ENCODE measurements at regions of chr9 and their contacts with region 1.

Region 1: GRCh38 chr9:124839612-124840299 is 13.5 kb upstream of the WDR38 start:
- H3K4me3 ChIP-seq: no peak overlapping the region
- H3K27ac ChIP-seq: no peak overlapping the region
- H3K4me1 ChIP-seq: peaks cover 3% of the 10 kb centered on the region; the same call in 1 of the 2 replicates
- CTCF ChIP-seq: no peak

Region 2: GRCh38 chr9:124708633-124709291 is 131.0 kb before region 1 on chr9:
- CTCF ChIA-PET with region 1: no interaction called
- POLR2A ChIA-PET with region 1: no interaction called
- H3K4me3 ChIP-seq: no peak overlapping the region
- H3K27ac ChIP-seq: no peak overlapping the region
- H3K4me1 ChIP-seq: no peaks in the 10 kb centered on the region
- CTCF ChIP-seq: no peak

Region 3: DNA sequence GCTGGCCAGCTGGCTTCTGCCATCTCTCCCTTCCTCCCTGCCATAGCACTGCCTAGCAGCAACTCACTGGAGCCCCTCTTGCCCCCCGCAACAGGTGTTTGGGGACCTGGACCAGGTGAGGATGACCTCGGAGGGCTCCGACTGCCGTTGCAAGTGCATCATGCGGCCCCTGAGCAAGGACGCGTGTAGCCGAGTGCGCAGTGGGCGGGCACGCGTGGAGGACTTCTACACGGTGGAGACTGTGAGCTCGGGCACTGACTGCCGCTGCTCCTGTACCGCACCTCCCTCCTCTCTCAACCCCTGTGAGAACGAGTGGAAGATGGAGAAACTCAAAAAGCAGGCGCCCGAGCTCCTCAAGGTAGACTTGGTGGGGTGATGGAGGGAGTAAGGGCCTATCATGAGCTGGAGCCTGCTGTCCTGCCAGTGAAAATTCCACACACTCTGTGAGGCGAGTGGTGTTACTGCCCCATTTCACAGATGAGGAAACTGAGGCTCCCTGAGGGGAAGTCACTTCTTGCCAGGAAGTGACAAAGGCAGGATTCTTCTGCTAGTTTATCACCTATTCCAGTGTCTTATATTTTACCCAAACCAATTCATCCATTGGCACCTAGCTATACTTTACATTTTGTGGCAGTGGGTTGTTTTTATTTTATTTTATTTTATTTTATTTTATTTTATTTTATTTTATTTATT is 52.7 kb before region 1 on chr9:
- CTCF ChIA-PET with region 1: interaction called, 1,257 read pairs
- POLR2A ChIA-PET with region 1: no interaction called
- H3K4me3 ChIP-seq: no peak overlapping the region
- H3K27ac ChIP-seq: no peak overlapping the region
- H3K4me1 ChIP-seq: no peaks in the 10 kb centered on the region
- CTCF ChIP-seq: no peak

Region 4: GRCh38 chr9:124794902-124795491 is 44.8 kb before region 1 on chr9:
- CTCF ChIA-PET with region 1: interaction called, 15 read pairs
- POLR2A ChIA-PET with region 1: no interaction called
- H3K4me3 ChIP-seq: no peak overlapping the region
- H3K27ac ChIP-seq: no peak overlapping the region
- H3K4me1 ChIP-seq: no peaks in the 10 kb centered on the region
- CTCF ChIP-seq: peak; percentile 44; the same call in 1 of the 2 replicates

Region 5: DNA sequence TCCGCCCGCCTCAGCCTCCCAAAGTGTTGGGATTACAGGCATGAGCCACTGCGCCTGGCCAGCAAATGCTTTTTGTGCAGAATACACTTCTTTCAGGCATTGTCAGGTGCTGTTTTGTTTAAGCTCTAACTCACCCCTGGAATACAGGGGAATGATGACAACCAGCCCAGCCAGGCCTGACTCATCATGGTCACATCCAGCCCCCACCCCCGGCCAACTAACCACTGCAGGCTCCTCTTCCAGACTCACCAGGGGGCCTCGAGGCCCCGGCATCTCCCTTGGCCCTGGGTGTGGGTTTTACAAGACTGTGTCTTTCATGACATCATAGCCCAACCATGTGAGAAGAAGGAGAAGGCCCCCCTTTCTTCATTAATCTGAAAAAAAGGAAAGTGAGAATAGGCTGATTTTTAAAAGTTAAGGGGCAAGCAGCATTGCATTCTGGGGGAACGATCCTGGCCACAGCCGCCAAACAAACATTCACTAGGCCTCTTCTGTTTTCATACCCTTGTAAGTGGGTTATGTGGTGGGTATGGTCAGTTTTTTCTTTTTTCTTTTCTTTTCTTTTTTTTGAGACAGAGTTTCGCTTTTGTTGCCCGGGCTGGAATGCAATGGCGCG is 27.2 kb before region 1 on chr9:
- CTCF ChIA-PET with region 1: interaction called, 15 read pairs
- POLR2A ChIA-PET with region 1: interaction called, 13 read pairs
- H3K4me3 ChIP-seq: no peak overlapping the region
- H3K27ac ChIP-seq: no peak overlapping the region; the same call in none of the 2 replicates
- H3K4me1 ChIP-seq: 0 out of 2 replicates have a peak, but pooled peaks cover 3% of the 10 kb centered on the region
- CTCF ChIP-seq: no peak

Region 6: DNA sequence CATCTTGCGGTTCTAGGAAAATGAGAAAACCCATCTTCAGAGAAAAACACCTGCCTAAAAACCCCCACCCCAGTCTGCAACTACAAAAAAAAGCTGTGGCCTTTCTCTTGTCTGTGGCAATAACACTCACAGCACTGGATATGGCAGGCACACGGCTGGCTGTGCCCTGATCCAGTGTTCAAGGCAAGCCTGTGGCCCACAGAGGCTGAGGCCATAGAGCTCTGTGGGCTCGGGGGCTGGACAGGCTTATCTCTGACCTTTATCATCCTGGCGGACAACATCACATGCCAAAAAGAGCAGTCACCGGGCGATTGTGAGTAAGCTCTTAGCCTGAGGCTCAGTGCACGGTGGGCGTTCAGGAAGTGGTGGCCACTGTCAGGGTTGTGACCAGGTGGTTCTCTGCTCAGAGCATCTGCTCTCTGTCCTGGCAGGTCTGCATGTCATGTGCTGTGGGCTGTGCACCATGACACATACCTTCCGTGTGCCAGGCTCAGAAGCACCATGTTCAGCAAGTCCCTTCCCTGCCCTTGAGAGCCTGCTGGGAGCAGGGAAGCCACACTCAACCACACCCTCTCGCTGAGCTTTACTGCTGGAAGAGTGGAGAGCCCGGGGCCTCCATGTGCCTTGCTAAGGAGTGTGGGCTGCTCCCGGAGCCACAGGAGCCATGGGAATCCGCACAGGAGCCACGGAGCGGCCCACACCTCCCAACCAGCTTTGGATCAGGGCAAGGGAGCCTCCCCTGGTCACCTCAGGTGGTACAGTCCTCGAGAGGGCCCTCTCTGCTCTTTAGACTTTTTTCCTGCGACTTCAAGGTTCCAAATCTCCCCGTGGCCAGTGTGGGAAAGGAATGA is 21.1 kb before region 1 on chr9:
- CTCF ChIA-PET with region 1: interaction called, 15 read pairs
- POLR2A ChIA-PET with region 1: interaction called, 13 read pairs
- H3K4me3 ChIP-seq: no peak overlapping the region
- H3K27ac ChIP-seq: no peak overlapping the region
- H3K4me1 ChIP-seq: no peaks in the 10 kb centered on the region
- CTCF ChIP-seq: no peak

Measured in HEK293 (cell line).